AG04450 (cell line): ENCODE measurements at regions of chr1 and their contacts with region 1.

Region 1: DNA sequence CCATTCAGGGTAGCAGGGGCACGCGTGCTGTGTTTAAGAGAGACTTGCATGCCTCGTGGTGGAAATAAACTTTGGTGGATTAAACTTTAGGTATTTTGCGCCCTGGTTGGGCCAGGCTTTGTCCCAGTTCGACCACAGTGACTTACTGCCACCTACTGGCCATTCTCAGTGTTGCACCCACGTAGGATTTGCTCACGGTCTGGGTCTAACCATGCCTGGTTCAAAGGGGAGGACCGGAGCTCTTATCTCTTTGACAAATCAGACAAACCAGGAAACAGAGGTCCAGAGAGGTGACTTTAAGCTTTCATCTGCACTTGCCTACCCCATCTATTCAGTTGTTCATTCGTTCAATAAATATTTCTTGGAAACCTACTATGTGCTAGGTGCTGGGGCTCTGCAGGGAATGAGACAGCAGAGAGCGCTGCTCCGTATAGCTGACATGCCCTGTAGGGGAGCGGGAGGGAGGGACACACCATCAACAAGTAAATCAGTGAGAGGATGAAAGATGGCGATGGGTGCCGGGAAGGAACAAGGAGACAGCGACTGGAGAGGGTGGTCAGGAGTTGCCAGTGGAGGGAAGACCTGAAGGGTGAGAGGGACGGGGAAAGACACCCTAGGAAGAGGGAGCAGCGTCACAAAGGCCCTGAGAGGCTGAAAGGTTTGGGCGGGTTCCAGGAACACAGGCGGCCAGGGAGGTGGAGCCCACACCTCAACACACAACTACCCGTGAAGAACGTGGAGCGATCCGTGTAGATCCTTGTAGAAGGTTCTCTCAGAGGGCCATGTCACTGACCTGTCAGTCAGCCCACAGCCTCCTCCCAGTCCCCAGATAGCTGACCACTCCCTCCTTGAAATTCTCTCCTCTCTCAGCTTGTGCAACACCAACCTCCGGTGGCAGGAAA is 27.2 kb upstream of the TINAGL1 start:
- DNase-seq: peak; percentile 70
- H3K4me3 ChIP-seq: peak overlapping the region; percentile 49
- H3K27ac ChIP-seq: no peak overlapping the region
- H3K27me3 ChIP-seq: peaks cover 20% of the 10 kb centered on the region
- CTCF ChIP-seq: peak; percentile 90

Region 2: DNA sequence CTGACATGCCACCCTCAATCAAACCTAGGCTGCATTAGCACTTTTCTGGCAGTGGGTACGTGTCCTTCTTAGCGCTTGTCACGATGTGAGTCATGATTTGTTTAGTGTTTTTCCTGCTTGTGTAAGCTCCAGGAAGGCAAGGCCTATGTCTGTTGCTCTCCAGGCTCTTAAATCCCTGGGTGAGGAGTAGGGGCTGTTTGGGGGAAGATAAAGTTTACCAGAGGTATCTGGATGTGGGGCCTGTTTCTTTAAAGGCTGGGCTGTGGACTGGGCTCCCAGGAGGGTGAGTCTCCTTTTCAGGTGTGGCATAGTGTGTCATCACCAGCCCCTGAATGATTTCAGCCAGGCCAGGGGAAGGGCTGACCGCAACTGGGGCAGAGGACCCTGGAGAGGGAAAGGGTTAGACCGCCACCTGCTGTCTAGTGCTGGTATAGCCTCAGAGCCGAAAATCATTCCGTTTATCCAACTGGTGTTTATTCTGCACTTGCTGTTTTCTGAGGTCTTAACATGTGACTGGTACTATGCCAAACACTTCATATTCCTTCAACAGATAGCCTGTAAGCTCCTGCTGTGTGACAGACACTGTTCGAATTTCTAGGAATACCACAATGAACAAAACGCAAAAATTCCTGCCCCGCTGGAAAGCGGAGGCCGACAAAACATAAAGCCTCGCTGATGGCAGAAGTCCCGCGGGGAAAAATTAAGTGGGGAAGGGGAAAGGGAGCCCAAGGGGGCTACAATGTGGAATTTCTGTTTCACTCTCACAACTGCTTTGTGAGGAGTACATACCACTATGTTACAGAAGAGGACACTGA is 126.4 kb before region 1 on chr1:
- CTCF ChIA-PET with region 1: interaction called, 19 read pairs
- POLR2A ChIA-PET with region 1: no interaction called
- DNase-seq: peak; percentile 55
- H3K4me3 ChIP-seq: no peak overlapping the region
- H3K27ac ChIP-seq: peak overlapping the region; percentile 87
- H3K27me3 ChIP-seq: no peaks in the 10 kb centered on the region
- CTCF ChIP-seq: peak; percentile 99

Region 3: GRCh38 chr1:31460027-31460426 is 89.1 kb before region 1 on chr1:
- CTCF ChIA-PET with region 1: interaction called, 19 read pairs
- POLR2A ChIA-PET with region 1: no interaction called
- DNase-seq: no peak
- H3K4me3 ChIP-seq: no peak overlapping the region
- H3K27ac ChIP-seq: no peak overlapping the region
- H3K27me3 ChIP-seq: peaks cover 28% of the 10 kb centered on the region
- CTCF ChIP-seq: peak; percentile 42

Region 4: GRCh38 chr1:31531177-31531999 is 17.8 kb before region 1 on chr1:
- CTCF ChIA-PET with region 1: interaction called, 20 read pairs
- POLR2A ChIA-PET with region 1: no interaction called
- DNase-seq: peak; percentile 32
- H3K4me3 ChIP-seq: no peak overlapping the region
- H3K27ac ChIP-seq: no peak overlapping the region
- H3K27me3 ChIP-seq: peaks cover 6% of the 10 kb centered on the region
- CTCF ChIP-seq: no peak

Region 5: GRCh38 chr1:31789259-31790065 is 240.3 kb after region 1 on chr1:
- CTCF ChIA-PET with region 1: interaction called, 14 read pairs
- POLR2A ChIA-PET with region 1: interaction called, 4 read pairs
- DNase-seq: peak; percentile 80
- H3K4me3 ChIP-seq: peak overlapping the region; percentile 87
- H3K27ac ChIP-seq: peak overlapping the region; percentile 81
- H3K27me3 ChIP-seq: no peaks in the 10 kb centered on the region
- CTCF ChIP-seq: peak; percentile 94